ENCODE measurements at regions of chr18 and their contacts with region 1.

Region 1: GRCh38 chr18:22563098-22563707 is 145.5 kb upstream of the CTAGE1 start:
- DNase-seq: peak in 1 of 2 donors; percentile 68
- ATAC-seq: peak; percentile 63 to 77 (median 72)
- H3K4me3 ChIP-seq: peak overlapping the region in 9 of 10 donors; percentile 19 to 74 (median 57)
- H3K27ac ChIP-seq: peak overlapping the region; percentile 87 to 99 (median 96)
- H3K4me1 ChIP-seq: peaks cover 0 to 38% (median 27%) of the 10 kb centered on the region in 9 donors
- H3K27me3 ChIP-seq: peaks cover 0 to 47% (median 0%) of the 10 kb centered on the region in 7 donors
- CTCF ChIP-seq: peak; percentile 56 to 87 (median 82)

Region 2: GRCh38 chr18:21904856-21905255 is 658.3 kb before region 1 on chr18:
- intact Hi-C with region 1: loop called in 7 of 10 experiments (anchors 5 to 10 kb)
- DNase-seq: no peak
- ATAC-seq: no peak
- H3K4me3 ChIP-seq: no peak overlapping the region
- H3K27ac ChIP-seq: no peak overlapping the region
- H3K4me1 ChIP-seq: peaks cover 0 to 9% (median 0%) of the 10 kb centered on the region in 9 donors
- H3K27me3 ChIP-seq: no peaks in the 10 kb centered on the region
- CTCF ChIP-seq: no peak

Region 3: GRCh38 chr18:22169007-22169864 is 394.0 kb before region 1 on chr18 and contains the start of gene GATA6:
- intact Hi-C with region 1: loop called (anchors 2 to 10 kb)
- DNase-seq: peak; percentile 89 to 90
- ATAC-seq: peak; percentile 59 to 87 (median 72)
- H3K4me3 ChIP-seq: peak within 1 kb of the TSS; percentile 71 to 97 (median 93)
- H3K27ac ChIP-seq: peak within 1 kb of the TSS; percentile 92 to 100 (median 98)
- H3K4me1 ChIP-seq: peaks cover 0 to 43% (median 29%) of the 10 kb centered on the region in 9 donors
- H3K27me3 ChIP-seq: peaks cover 0 to 96% (median 37%) of the 10 kb centered on the region in 7 donors
- CTCF ChIP-seq: peak in 7 of 9 donors; percentile 25 to 68 (median 53)
- total RNA-seq, gene GATA6: 54.6 to 99.5 (median 73.4) TPM

Region 4: GRCh38 chr18:22279741-22280452 is 283.3 kb before region 1 on chr18:
- intact Hi-C with region 1: loop called in 2 of 10 experiments (anchors 5 kb)
- DNase-seq: no peak
- ATAC-seq: peak in 2 of 8 donors; percentile 39 to 57
- H3K4me3 ChIP-seq: no peak overlapping the region
- H3K27ac ChIP-seq: peak overlapping the region in 9 of 10 donors; percentile 42 to 92 (median 85)
- H3K4me1 ChIP-seq: peaks cover 0 to 55% (median 16%) of the 10 kb centered on the region in 9 donors
- H3K27me3 ChIP-seq: no peaks in the 10 kb centered on the region
- CTCF ChIP-seq: no peak

Region 5: GRCh38 chr18:22378672-22379282 is 184.4 kb before region 1 on chr18:
- intact Hi-C with region 1: loop called in 2 of 10 experiments (anchors 5 to 10 kb)
- DNase-seq: peak; percentile 14 to 27
- ATAC-seq: peak in 7 of 8 donors; percentile 64 to 87 (median 72)
- H3K4me3 ChIP-seq: no peak overlapping the region
- H3K27ac ChIP-seq: no peak overlapping the region
- H3K4me1 ChIP-seq: no peaks in the 10 kb centered on the region
- H3K27me3 ChIP-seq: no peaks in the 10 kb centered on the region
- CTCF ChIP-seq: peak; percentile 15 to 66 (median 56)

Region 6: DNA sequence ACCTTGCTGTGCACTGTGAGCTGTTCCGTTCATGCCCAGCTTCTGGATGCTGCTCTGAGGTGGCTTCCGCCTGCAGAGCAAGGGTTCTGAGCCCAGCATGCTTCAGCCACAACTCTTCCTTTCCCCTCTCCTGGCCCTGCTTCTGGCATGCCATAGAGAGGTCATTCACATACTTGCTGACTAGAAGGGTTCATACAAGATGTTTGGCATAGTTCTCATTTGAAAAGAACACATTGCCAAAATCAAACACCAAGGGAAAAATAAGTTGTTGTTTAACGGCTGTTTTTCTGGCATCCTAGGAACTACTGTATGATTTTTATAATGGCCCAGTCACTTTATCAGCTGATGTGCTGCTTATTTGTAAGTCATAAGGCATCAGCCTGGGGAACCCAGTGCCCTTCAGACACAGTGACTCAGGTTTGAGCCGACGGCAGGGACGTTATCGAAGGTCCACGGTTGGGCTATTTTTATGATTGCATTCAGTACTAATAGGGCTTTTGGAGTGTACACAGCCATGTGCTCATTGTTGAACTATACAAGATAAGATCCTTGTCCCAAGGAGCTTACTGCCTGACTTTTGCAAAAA is 91.6 kb before region 1 on chr18:
- intact Hi-C with region 1: loop called in 8 of 10 experiments (anchors 1 to 10 kb)
- DNase-seq: peak; percentile 51 to 82
- ATAC-seq: peak; percentile 83 to 95 (median 90)
- H3K4me3 ChIP-seq: no peak overlapping the region
- H3K27ac ChIP-seq: peak overlapping the region; percentile 77 to 92 (median 84)
- H3K4me1 ChIP-seq: peaks cover 21 to 56% (median 51%) of the 10 kb centered on the region in 9 donors
- H3K27me3 ChIP-seq: no peaks in the 10 kb centered on the region
- CTCF ChIP-seq: no peak

Region 7: GRCh38 chr18:22703883-22704585 is 140.8 kb after region 1 on chr18:
- intact Hi-C with region 1: loop called in 3 of 10 experiments (anchors 10 kb)
- DNase-seq: peak in 1 of 2 donors; percentile 29
- ATAC-seq: peak in 7 of 8 donors; percentile 67 to 85 (median 78)
- H3K4me3 ChIP-seq: no peak overlapping the region
- H3K27ac ChIP-seq: no peak overlapping the region
- H3K4me1 ChIP-seq: peaks cover 0 to 28% (median 3%) of the 10 kb centered on the region in 9 donors
- H3K27me3 ChIP-seq: no peaks in the 10 kb centered on the region
- CTCF ChIP-seq: peak; percentile 71 to 91 (median 85)

Measured in heart right ventricle (tissue), 16 donors.